ENCODE measurements at regions of chr2 and their contacts with region 1.

Region 1: DNA sequence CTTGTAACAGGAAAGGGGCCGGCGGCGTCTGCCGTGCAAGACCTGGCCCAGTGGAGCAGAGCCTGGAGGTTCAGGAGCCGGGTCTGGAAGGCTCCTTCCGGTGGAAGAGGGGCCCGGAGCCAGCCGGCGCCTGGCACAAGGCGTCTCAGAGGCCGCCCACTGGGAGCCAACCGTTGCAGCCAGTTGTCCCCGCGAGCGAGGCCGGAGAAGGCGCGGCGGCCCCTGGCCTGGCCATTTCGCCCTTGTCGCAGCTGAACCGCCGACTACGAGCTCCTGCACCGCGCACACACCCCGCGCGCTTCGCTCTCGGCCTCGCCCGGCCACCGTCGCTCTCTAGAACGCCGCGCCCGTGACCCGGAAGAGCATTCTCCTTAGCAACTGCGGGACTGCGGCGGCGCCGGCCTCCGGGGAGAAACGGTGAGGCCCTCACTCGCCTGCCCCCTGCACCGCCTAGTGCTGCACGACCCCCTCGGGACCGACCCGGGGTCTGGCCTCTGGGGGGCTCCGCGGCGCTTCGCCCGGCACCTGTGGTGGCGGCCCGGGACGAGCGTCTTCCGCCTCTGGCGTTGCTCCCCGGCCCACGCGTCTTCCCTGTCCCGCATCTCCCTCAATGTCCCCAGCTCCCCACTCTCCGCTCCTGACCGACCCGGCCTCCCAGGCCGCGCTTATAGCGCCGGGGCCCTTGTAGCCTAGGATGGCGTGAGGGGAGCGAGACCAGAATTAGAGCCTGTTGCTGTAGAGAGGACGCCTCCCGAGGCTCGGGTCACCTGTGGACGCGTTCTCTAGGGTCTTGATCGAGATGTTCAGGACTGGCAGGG is at the start of gene DIS3L2:
- DNase-seq: peak; percentile 59 to 66 (median 59)
- H3K4me3 ChIP-seq: peak within 1 kb of the TSS; percentile 87 to 95 (median 92)
- H3K4me3 Mint-ChIP-seq: peak within 1 kb of the TSS; percentile 92 to 94
- H3K27ac ChIP-seq: peak within 1 kb of the TSS; percentile 12 to 78
- H3K27ac Mint-ChIP-seq: peak within 1 kb of the TSS in 6 of 7 donors; percentile 79 to 91 (median 84)
- H3K4me1 ChIP-seq: peaks cover 11 to 16% of the 10 kb centered on the region in 2 donors
- H3K4me1 Mint-ChIP-seq: peaks cover 28% of the 10 kb centered on the region
- H3K27me3 ChIP-seq: no peaks in the 10 kb centered on the region
- H3K27me3 Mint-ChIP-seq: peaks cover 2 to 7% (median 5%) of the 10 kb centered on the region in 3 donors
- CTCF ChIP-seq: no peak
- polyA plus RNA-seq, gene DIS3L2: 6.0 to 21.7 (median 6.4) TPM

Region 2: DNA sequence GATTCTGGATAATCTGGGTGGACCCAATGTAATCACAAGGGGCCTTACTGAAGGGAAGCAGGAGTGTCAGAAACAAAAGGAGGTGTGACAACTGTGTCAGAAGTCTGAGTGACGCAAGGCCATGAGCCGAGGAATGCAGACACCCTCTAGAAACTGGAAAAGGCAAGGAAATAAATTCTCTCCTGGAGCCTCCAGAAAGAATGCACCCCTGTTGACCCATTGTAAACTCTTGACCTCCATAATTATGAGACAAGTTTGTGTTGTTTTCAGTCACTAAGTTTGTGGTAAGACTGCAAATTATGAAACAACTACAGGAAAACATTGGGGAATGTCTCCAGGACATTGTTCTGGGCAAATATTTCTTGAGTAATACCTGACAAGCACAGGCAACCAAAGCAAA is 613.4 kb before region 1 on chr2:
- intact Hi-C with region 1: no loop called
- DNase-seq: no peak
- H3K4me3 ChIP-seq: no peak overlapping the region
- H3K4me3 Mint-ChIP-seq: no peak overlapping the region
- H3K27ac ChIP-seq: no peak overlapping the region
- H3K27ac Mint-ChIP-seq: no peak overlapping the region
- H3K4me1 ChIP-seq: peaks cover 8 to 14% of the 10 kb centered on the region in 2 donors
- H3K4me1 Mint-ChIP-seq: peaks cover 20% of the 10 kb centered on the region
- H3K27me3 ChIP-seq: no peaks in the 10 kb centered on the region
- H3K27me3 Mint-ChIP-seq: peaks cover 0 to 4% (median 2%) of the 10 kb centered on the region in 3 donors
- CTCF ChIP-seq: no peak

Region 3: DNA sequence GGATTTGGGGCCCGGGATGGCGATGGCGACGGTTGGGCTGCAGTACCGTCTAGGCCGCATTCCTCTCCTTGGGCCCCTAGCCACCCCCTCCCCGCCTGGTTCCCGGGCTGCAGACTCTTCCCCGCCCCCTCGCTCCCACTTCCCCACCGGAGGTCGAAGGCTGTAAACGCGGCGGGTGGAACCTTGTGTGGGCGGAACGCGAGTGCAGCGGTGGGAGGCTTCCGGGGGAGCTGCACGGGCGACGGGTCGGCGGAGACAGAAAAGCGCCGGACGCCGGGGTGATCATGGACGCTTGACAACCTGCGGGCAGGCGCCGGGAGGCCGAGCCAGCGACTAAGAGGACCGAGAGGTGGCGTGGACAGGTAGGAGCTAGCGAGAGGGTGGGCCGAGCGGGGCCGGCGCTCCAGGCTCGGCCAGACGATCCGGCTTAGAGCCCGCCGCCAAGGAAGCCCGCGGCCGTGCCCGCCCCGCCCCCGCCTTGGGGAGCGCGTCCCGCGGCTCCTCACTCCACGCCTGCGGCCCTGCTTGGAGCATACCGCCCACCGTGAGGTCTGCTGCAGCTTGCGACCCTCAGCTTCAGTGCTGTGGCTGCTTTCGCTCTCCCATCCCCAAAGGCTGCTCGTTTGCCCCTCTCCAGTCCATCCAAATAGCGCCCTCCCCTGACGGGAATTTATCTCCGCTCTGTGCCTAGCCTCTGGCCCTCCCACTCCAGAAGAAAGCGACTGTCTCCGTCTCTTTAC is 175.2 kb before region 1 on chr2 and contains the start of gene COPS7B:
- intact Hi-C with region 1: loop called (anchors 5 kb)
- DNase-seq: peak; percentile 69 to 76 (median 73)
- H3K4me3 ChIP-seq: peak within 1 kb of the TSS; percentile 59 to 88 (median 77)
- H3K4me3 Mint-ChIP-seq: peak within 1 kb of the TSS; percentile 87 to 94
- H3K27ac ChIP-seq: peak within 1 kb of the TSS in 1 of 2 donors; percentile 70
- H3K27ac Mint-ChIP-seq: peak within 1 kb of the TSS; percentile 51 to 85 (median 77)
- H3K4me1 ChIP-seq: peaks cover 24 to 40% of the 10 kb centered on the region in 2 donors
- H3K4me1 Mint-ChIP-seq: peaks cover 40% of the 10 kb centered on the region
- H3K27me3 ChIP-seq: no peaks in the 10 kb centered on the region
- H3K27me3 Mint-ChIP-seq: peaks cover 0 to 4% (median 0%) of the 10 kb centered on the region in 3 donors
- CTCF ChIP-seq: peak; percentile 52
- polyA plus RNA-seq, gene COPS7B: 9.5 to 38.8 (median 11.9) TPM

Region 4: DNA sequence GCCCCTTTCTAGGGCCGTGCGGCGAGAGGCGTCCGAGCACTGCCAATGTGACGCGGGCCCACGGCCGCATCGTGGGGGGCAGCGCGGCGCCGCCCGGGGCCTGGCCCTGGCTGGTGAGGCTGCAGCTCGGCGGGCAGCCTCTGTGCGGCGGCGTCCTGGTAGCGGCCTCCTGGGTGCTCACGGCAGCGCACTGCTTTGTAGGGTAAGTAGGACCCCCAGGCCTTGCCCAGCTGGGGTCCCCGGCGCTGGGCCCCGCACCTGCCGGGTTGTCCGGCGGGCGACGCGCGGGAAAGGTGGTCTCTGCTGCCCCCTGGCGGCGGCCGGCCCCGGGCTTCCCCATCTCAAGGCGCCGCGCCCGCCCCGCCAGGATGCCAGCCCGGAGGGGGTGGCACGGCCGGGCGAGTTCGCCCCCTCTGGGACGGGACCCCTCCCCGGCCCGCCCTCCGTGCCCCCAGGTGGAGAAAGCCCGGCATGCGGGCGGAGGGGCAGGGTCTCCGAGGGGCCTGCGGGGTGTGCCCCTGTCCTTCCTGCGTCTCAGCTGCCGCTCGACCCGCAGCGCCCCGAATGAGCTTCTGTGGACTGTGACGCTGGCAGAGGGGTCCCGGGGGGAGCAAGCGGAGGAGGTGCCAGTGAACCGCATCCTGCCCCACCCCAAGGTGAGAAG is 560.5 kb after region 1 on chr2:
- intact Hi-C with region 1: no loop called
- DNase-seq: peak; percentile 21 to 52 (median 26)
- H3K4me3 ChIP-seq: peak overlapping the region in 1 of 3 experiments; percentile 51
- H3K4me3 Mint-ChIP-seq: peak overlapping the region in 1 of 2 donors; percentile 74
- H3K27ac ChIP-seq: no peak overlapping the region
- H3K27ac Mint-ChIP-seq: no peak overlapping the region
- H3K4me1 ChIP-seq: peaks cover 4 to 21% of the 10 kb centered on the region in 2 donors
- H3K4me1 Mint-ChIP-seq: peaks cover 10% of the 10 kb centered on the region
- H3K27me3 ChIP-seq: peaks cover 24 to 56% of the 10 kb centered on the region in 2 donors
- H3K27me3 Mint-ChIP-seq: peaks cover 35 to 64% (median 47%) of the 10 kb centered on the region in 3 donors
- CTCF ChIP-seq: peak; percentile 97

Measured in CD14-positive monocyte (primary cell).